Heart right ventricle (tissue), 16 donors: ENCODE measurements at regions of chr4 and their contacts with region 1.

Region 1: DNA sequence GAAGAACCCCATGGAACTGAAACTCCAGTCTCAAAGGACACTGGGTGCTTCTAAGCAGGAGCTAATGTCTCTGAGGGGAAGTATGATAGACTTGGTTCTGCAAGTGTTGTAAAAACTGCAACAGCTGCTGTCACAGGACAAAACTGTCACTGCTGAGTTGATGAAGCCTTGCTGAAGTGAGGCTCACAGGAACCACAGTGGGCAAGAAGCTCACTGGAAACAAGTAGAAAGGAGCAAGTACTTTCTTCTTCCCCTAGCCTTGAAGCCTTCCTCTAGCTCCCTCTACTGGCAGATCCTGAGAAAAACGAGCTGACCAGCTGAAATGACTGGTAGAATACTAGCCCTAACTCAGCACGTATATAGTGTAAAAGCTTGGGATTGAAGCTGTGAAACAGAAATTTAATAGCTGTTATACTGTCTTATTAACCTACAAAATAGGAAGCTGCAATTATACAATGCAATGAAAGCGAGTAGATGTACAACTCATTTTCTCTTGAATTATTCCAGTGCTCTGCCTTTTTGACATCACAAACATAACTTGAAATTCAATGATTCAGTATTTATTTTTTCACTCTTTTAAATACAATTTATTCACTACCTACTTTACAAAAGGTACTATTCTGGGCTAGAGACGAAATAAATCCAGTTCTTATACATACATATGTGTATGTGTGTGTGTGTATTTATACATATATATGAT is 91.4 kb downstream of the GABRB1 start:
- DNase-seq: peak in 1 of 2 donors; percentile 48
- ATAC-seq: peak in 5 of 8 donors; percentile 20 to 74 (median 64)
- H3K4me3 ChIP-seq: no peak overlapping the region
- H3K27ac ChIP-seq: no peak overlapping the region
- H3K4me1 ChIP-seq: peaks cover 0 to 4% (median 0%) of the 10 kb centered on the region in 9 donors
- H3K27me3 ChIP-seq: no peaks in the 10 kb centered on the region
- CTCF ChIP-seq: peak; percentile 47 to 84 (median 74)

Region 2: DNA sequence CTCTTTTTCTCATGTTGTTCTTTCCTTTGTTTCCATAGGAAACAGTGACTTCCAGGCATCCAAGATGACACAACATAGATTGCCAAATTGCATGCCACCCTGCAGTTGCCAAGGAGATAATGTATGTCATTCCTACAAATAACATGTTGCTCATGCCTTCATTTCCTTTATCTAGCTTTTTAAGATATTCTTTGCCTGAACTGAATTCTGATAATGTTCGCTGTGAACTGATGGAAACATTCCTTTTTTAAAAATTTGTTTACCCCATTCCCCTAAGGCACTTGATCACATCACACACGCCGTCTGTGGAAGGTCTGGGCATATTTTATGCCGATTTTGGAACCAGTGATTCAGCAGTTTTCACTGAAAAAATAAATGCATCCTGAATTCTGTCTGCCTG is 175.7 kb before region 1 on chr4:
- intact Hi-C with region 1: loop called in 1 of 10 experiments (anchors 10 kb)
- DNase-seq: no peak
- ATAC-seq: peak in 2 of 8 donors; percentile 46 to 49
- H3K4me3 ChIP-seq: no peak overlapping the region
- H3K27ac ChIP-seq: peak overlapping the region in 5 of 10 donors; percentile 49 to 63 (median 61)
- H3K4me1 ChIP-seq: peaks cover 0 to 58% (median 0%) of the 10 kb centered on the region in 9 donors
- H3K27me3 ChIP-seq: no peaks in the 10 kb centered on the region
- CTCF ChIP-seq: no peak